ENCODE measurements at regions of chr20 and their contacts with region 1.

Region 1: DNA sequence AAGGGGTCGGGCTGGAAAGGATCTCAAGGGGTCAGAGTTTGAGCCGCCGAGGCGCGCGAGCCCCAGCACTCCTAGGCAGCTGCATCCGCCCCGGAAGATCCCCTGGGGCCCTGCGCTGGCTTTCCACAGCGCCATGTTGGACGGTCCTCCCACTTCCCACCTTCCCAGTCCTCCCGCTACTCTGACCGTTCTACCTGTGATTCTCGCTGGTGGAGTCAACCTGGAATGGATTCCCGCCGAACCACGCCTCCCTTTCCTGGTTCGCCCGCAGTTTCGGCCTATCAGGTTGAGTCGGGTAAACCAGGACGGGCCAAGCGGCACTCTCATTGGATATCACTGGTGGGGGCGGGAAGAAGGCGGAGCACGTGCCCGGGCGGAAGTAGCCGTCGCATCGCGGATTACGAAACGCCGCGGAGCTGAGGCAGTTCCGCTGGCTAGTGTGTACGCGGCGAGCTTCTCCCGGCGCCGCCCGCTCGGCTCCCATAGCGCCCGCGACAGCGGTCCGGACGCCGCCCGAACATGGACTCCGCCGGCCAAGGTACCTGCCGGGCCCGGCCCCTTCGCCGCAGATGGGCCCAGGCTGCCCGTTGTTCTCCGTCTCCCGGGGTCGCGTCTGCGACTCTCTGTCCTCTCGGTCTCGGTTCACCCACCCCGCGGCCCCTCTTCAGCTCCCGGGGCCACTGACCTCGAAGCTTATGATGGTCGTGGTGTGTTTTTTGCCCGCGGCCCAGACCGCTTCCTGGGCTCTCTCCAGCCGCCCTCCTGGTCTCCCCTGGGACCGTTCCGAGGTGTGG is at the start of gene TPD52L2:
- DNase-seq: peak; percentile 98
- H3K4me3 ChIP-seq: peak within 1 kb of the TSS; percentile 88
- H3K27ac ChIP-seq: peak within 1 kb of the TSS; percentile 71
- H3K4me1 ChIP-seq: peaks cover 9% of the 10 kb centered on the region
- CTCF ChIP-seq: no peak
- total RNA-seq, gene TPD52L2: 27.2 and 28.6 TPM in 2 replicates

Region 2: GRCh38 chr20:63707549-63708300 is 157.3 kb before region 1 on chr20 and contains the starts of genes ARFRP1 and ZGPAT:
- CTCF ChIA-PET with region 1: no interaction called
- POLR2A ChIA-PET with region 1: no interaction called
- intact Hi-C with region 1: loop called (anchors 1 kb)
- DNase-seq: peak; percentile 90
- H3K4me3 ChIP-seq: peak within 1 kb of the TSS; percentile 97
- H3K27ac ChIP-seq: peak within 1 kb of the TSS; percentile 71
- H3K4me1 ChIP-seq: peaks cover 31% of the 10 kb centered on the region
- CTCF ChIP-seq: no peak
- total RNA-seq, gene ARFRP1: 47.9 and 53.3 TPM in 2 replicates
- total RNA-seq, gene ZGPAT: 43.1 and 43.9 TPM in 2 replicates

Region 3: DNA sequence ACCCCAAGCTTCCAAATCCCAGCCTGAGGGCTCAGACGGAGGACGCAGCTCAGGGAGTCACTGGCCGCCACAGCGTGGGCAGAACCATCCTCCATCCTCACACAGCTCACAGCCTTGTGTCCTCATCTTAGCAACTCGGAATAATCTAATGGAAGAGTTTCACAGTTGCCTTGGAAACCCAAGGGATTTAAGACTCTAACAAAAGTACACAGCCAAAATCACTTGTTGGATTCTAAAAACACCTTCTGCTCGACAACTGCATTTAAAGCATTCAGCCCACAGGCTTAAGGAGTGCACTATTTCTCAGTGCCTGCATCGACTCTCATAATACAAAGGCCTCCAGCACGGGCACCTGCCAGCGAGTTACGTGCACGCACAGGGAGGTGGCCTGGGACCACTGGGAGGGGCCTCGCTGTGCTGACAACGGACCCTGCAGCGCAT is 79.3 kb before region 1 on chr20:
- CTCF ChIA-PET with region 1: no interaction called
- POLR2A ChIA-PET with region 1: interaction called, 5 read pairs
- intact Hi-C with region 1: loop called (anchors 2 kb)
- DNase-seq: no peak
- H3K4me3 ChIP-seq: no peak overlapping the region
- H3K27ac ChIP-seq: no peak overlapping the region
- H3K4me1 ChIP-seq: peaks cover 32% of the 10 kb centered on the region
- CTCF ChIP-seq: no peak

Region 4: GRCh38 chr20:63894358-63895201 is 29.5 kb after region 1 on chr20 and contains the start of gene DNAJC5:
- CTCF ChIA-PET with region 1: no interaction called
- POLR2A ChIA-PET with region 1: interaction called, 4 read pairs
- intact Hi-C with region 1: loop called (anchors 2 kb)
- DNase-seq: peak; percentile 97
- H3K4me3 ChIP-seq: peak within 1 kb of the TSS; percentile 84
- H3K27ac ChIP-seq: peak within 1 kb of the TSS; percentile 75
- H3K4me1 ChIP-seq: peaks cover 11% of the 10 kb centered on the region
- CTCF ChIP-seq: no peak
- total RNA-seq, gene DNAJC5: 23.5 and 27.7 TPM in 2 replicates

Region 5: DNA sequence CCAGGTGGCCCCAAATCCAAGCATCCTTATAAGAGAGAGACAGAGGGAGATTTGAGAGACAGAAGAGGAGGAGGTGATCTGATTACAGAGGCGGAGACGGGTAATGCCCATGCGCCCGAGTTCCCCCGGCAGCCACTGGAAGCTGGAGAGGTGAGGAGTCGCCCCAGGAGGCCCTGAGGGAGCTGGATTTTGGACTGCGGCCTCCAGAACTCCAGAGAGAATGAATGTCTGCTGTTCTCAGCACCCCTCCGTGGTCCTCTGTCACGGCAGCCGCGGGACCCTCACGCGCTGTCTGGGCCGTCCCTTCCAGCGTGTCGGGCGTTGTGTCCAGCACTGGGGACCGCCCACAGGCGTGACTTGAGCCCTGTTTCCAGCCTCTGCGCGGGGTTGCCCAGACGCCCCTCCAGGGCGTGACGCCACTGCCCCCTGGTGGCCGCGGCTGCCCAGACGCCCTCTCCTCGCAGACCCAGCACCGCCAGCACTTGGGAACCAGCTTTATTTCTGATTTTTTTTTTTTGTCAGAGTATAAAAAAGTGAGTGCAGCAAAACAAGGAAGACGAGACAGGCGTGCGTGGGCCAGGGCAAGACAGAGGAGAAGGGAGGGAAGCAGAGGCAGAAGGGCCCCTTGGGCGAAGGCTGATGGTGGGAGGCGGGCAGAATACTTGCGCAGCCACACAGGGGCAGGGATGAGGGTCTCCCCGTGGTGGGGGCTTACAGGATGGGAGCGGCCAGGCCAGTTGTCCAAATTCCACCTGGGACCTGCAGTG is 108.8 kb after region 1 on chr20:
- CTCF ChIA-PET with region 1: no interaction called
- POLR2A ChIA-PET with region 1: no interaction called
- intact Hi-C with region 1: loop called (anchors 5 kb)
- DNase-seq: peak; percentile 81
- H3K4me3 ChIP-seq: no peak overlapping the region
- H3K27ac ChIP-seq: no peak overlapping the region
- H3K4me1 ChIP-seq: peaks cover 32% of the 10 kb centered on the region
- CTCF ChIP-seq: peak; percentile 97

Region 6: GRCh38 chr20:64021124-64021975 is 156.3 kb after region 1 on chr20:
- CTCF ChIA-PET with region 1: no interaction called
- POLR2A ChIA-PET with region 1: no interaction called
- intact Hi-C with region 1: no loop called
- DNase-seq: no peak
- H3K4me3 ChIP-seq: no peak overlapping the region
- H3K27ac ChIP-seq: no peak overlapping the region
- H3K4me1 ChIP-seq: no peaks in the 10 kb centered on the region
- CTCF ChIP-seq: no peak